GM12878 (cell line): ENCODE measurements at regions of chr3 and their contacts with region 1.

Region 1: DNA sequence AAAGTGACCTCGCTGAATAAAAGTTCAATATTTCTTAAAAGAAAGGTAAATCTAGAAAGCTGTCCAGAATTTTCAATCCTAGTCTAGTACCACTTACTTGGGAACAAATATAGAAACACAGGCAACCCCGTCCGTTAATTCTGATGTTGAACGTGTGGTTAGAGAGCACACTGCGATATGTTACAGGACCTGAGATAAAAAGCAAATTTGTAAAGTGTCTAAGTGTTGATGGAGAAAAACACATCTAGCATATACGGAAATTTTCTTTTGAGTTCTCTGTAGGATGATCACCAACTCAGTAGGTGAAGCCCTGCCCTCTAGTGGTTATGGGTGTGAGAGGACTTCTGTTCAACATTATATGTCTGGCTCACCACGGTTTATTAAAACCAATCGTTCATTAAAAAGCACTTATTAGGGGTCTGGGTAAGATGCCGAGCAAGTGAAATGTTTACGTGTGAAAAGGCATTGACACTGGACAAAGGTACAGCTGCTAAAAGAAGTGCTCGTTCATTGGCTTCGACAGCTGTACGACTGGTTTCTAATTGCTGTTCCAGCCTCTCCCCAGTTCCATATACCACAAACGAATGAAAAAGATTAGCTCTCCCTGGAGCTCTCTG is 1.0 kb upstream of the ATP2C1 start:
- DNase-seq: peak; percentile 64
- ATAC-seq: peak; percentile 73
- H3K4me3 ChIP-seq: peak overlapping the region; percentile 86
- H3K27ac ChIP-seq: peak overlapping the region; percentile 94
- H3K4me1 ChIP-seq: no peaks in the 10 kb centered on the region; the same call in 1 of the 2 replicates
- H3K27me3 ChIP-seq: no peaks in the 10 kb centered on the region
- CTCF ChIP-seq: peak; percentile 77 to 90 (median 82)
- EP300 ChIP-seq: no peak
- POLR2A ChIP-seq: no peak
- RAD21 ChIP-seq: peak; percentile 94

Region 2: DNA sequence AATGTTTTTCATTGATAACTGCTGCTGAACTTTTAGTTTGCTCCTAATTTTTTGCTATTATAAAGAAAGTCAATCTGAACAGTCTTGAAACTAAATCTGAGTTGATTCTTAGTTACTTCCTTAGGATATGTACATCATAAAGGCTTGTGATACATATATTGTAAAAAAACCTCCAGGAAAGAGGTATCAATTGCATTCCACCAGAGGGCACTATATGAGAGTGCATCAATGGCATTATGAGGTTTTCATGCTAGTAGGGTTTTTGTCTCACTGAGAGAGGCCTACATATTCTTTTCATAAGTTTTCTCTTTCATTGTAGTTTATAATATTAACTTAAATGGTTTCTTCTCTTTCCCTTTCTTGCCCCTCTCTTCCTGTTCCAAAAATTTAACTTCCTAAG is 193.1 kb before region 1 on chr3:
- CTCF ChIA-PET with region 1: interaction called, 5 read pairs
- POLR2A ChIA-PET with region 1: no interaction called
- RAD21 ChIA-PET with region 1: interaction called, 8 read pairs
- SMC1A ChIA-PET with region 1: interaction called, 4 read pairs
- in situ Hi-C with region 1: no loop called
- intact Hi-C with region 1: loop called (anchors 1 kb)
- DNase-seq: no peak
- ATAC-seq: peak; percentile 89
- H3K4me3 ChIP-seq: no peak overlapping the region
- H3K27ac ChIP-seq: no peak overlapping the region
- H3K4me1 ChIP-seq: no peaks in the 10 kb centered on the region
- H3K27me3 ChIP-seq: no peaks in the 10 kb centered on the region
- CTCF ChIP-seq: peak; percentile 44 to 60 (median 59)
- EP300 ChIP-seq: no peak
- POLR2A ChIP-seq: no peak
- RAD21 ChIP-seq: peak; percentile 63

Region 3: DNA sequence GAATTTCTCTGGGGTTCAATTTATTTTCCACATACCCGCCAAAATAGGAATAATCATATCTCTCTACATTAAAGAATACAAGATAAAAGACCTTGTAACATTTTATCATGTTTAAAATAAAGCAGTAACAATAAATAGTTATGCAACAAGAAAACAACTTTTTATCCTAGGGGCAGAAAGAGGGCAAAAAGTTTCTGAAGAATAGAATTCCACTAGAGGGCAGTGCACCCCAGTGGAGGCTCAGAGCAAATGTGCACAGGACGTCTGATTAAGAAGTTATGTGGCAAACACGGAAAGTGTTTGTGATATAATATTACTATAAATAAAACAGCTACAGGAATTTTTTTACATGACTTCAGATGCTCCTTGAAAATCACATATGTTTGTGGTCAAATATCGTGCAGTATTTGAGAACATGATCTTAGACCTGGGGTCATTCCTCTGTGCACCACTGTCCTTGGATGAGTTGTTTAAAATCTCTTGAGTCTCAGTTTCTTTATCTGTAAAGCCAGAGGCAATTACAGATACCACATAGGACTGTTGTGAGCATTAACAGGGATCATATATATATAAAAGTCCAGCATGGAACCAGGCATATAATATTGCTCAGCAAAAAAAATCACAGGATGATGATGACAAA is 133.0 kb before region 1 on chr3:
- CTCF ChIA-PET with region 1: interaction called, 200 read pairs
- POLR2A ChIA-PET with region 1: interaction called, 6 read pairs
- RAD21 ChIA-PET with region 1: interaction called, 132 read pairs
- SMC1A ChIA-PET with region 1: interaction called, 163 read pairs
- in situ Hi-C with region 1: no loop called
- intact Hi-C with region 1: loop called (anchors 1 kb)
- DNase-seq: no peak
- ATAC-seq: peak; percentile 91
- H3K4me3 ChIP-seq: no peak overlapping the region
- H3K27ac ChIP-seq: no peak overlapping the region
- H3K4me1 ChIP-seq: no peaks in the 10 kb centered on the region
- H3K27me3 ChIP-seq: no peaks in the 10 kb centered on the region
- CTCF ChIP-seq: peak; percentile 72 to 87 (median 74)
- EP300 ChIP-seq: no peak
- POLR2A ChIP-seq: no peak
- RAD21 ChIP-seq: peak; percentile 99

Region 4: GRCh38 chr3:130857326-130858026 is 35.4 kb before region 1 on chr3:
- CTCF ChIA-PET with region 1: interaction called, 54 read pairs
- POLR2A ChIA-PET with region 1: interaction called, 47 read pairs
- RAD21 ChIA-PET with region 1: interaction called, 81 read pairs
- SMC1A ChIA-PET with region 1: interaction called, 144 read pairs
- in situ Hi-C with region 1: no loop called
- intact Hi-C with region 1: no loop called
- DNase-seq: peak; percentile 60
- ATAC-seq: peak; percentile 35
- H3K4me3 ChIP-seq: peak overlapping the region; percentile 21; the same call in 1 of the 2 replicates
- H3K27ac ChIP-seq: peak overlapping the region; percentile 63
- H3K4me1 ChIP-seq: peaks cover 4% of the 10 kb centered on the region
- H3K27me3 ChIP-seq: no peaks in the 10 kb centered on the region
- CTCF ChIP-seq: no peak
- EP300 ChIP-seq: no peak
- POLR2A ChIP-seq: no peak
- RAD21 ChIP-seq: no peak

Region 5: DNA sequence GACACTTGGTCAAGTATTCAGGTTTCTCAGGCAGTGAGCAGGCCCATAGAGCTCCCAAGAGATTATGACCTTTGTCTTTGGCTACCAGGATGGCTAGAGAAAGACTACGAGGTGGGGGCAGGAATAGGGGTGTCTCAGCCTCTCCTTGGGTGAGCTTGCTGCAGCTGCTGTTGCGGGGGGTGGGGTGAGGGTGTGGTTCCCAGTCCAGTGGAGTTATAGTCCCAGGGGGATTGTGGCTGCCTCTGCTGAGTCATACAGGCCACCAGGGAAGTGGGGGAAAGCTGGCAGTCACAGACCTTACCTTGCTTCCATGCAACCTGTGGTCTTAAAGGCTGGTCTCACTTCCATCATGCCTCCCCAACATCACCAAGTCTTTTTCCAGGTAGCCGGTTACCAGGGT is 32.8 kb after region 1 on chr3:
- CTCF ChIA-PET with region 1: interaction called, 4 read pairs
- POLR2A ChIA-PET with region 1: no interaction called
- RAD21 ChIA-PET with region 1: interaction called, 3 read pairs
- SMC1A ChIA-PET with region 1: interaction called, 13 read pairs
- in situ Hi-C with region 1: no loop called
- intact Hi-C with region 1: no loop called
- DNase-seq: peak; percentile 56
- ATAC-seq: peak; percentile 83
- H3K4me3 ChIP-seq: no peak overlapping the region
- H3K27ac ChIP-seq: 0 out of 2 replicates have a peak overlapping the region, but pooled peaks have one; percentile 11
- H3K4me1 ChIP-seq: peaks cover 11% of the 10 kb centered on the region
- H3K27me3 ChIP-seq: no peaks in the 10 kb centered on the region
- CTCF ChIP-seq: no peak
- EP300 ChIP-seq: peak in 1 of 2 experiments; percentile 38; a peak in 1 of 4 replicates
- POLR2A ChIP-seq: no peak
- RAD21 ChIP-seq: no peak

Region 6: GRCh38 chr3:130950641-130951040 is 57.8 kb after region 1 on chr3:
- CTCF ChIA-PET with region 1: interaction called, 11 read pairs
- POLR2A ChIA-PET with region 1: no interaction called
- RAD21 ChIA-PET with region 1: interaction called, 3 read pairs
- SMC1A ChIA-PET with region 1: interaction called, 16 read pairs
- in situ Hi-C with region 1: no loop called
- intact Hi-C with region 1: no loop called
- DNase-seq: no peak
- ATAC-seq: no peak
- H3K4me3 ChIP-seq: no peak overlapping the region
- H3K27ac ChIP-seq: no peak overlapping the region
- H3K4me1 ChIP-seq: no peaks in the 10 kb centered on the region
- H3K27me3 ChIP-seq: no peaks in the 10 kb centered on the region
- CTCF ChIP-seq: no peak
- EP300 ChIP-seq: no peak
- POLR2A ChIP-seq: no peak
- RAD21 ChIP-seq: no peak

Region 7: GRCh38 chr3:130981469-130981868 is 88.6 kb after region 1 on chr3:
- CTCF ChIA-PET with region 1: no interaction called
- POLR2A ChIA-PET with region 1: no interaction called
- RAD21 ChIA-PET with region 1: no interaction called
- SMC1A ChIA-PET with region 1: no interaction called
- in situ Hi-C with region 1: no loop called
- intact Hi-C with region 1: no loop called
- DNase-seq: no peak
- ATAC-seq: no peak
- H3K4me3 ChIP-seq: no peak overlapping the region
- H3K27ac ChIP-seq: no peak overlapping the region
- H3K4me1 ChIP-seq: no peaks in the 10 kb centered on the region
- H3K27me3 ChIP-seq: no peaks in the 10 kb centered on the region
- CTCF ChIP-seq: no peak
- EP300 ChIP-seq: no peak
- POLR2A ChIP-seq: no peak
- RAD21 ChIP-seq: no peak